ENCODE measurements at regions of chr4 and their contacts with region 1.

Region 1: DNA sequence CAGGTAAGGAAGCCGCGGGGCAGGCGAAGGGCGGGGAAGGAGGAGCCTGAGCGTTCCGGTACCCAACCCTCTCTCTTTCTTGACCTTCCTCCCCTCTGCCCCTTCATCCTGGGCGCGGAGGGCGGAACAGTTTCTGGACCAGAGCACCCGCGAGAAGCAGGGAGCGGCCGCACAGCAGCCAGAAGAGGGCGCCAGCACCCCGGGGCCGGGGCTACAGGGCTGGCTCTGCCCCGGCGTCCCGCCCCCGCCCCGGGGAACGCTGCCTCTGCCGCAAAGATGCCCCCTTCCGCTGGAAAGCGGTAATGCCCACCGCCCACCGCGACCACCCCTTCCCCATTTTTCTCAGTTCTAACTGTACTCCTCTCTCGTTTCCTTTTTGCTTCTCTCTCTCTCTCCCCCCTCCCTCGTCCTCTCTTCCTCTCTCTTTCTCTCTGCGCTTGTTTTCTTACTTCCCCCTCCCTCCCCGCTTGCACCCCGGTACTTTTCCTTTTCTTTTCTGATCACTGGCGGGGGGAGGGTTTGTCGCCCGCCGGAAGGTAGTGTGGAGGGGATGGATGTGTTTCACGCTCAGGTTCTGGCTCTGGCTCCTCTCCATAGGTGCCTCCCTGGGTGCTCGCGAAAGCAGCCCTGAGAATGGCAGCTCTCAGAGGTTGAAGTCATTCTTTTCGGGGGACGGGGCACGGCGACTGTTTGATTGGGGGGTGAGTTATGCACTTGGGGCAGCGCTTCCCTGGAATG is 13.1 kb upstream of the PRDM8 start:
- DNase-seq: peak; percentile 95
- H3K4me3 Mint-ChIP-seq: peak overlapping the region; percentile 99
- H3K27ac Mint-ChIP-seq: peak overlapping the region; percentile 97
- H3K4me1 Mint-ChIP-seq: peaks cover 53% of the 10 kb centered on the region
- H3K27me3 Mint-ChIP-seq: peaks cover 6% of the 10 kb centered on the region

Region 2: GRCh38 chr4:80017125-80017854 is 166.9 kb before region 1 on chr4:
- CTCF ChIA-PET with region 1: interaction called, 3 read pairs
- POLR2A ChIA-PET with region 1: interaction called, 17 read pairs
- DNase-seq: no peak
- H3K4me3 Mint-ChIP-seq: no peak overlapping the region
- H3K27ac Mint-ChIP-seq: no peak overlapping the region
- H3K4me1 Mint-ChIP-seq: peaks cover 26% of the 10 kb centered on the region
- H3K27me3 Mint-ChIP-seq: no peaks in the 10 kb centered on the region

Region 3: DNA sequence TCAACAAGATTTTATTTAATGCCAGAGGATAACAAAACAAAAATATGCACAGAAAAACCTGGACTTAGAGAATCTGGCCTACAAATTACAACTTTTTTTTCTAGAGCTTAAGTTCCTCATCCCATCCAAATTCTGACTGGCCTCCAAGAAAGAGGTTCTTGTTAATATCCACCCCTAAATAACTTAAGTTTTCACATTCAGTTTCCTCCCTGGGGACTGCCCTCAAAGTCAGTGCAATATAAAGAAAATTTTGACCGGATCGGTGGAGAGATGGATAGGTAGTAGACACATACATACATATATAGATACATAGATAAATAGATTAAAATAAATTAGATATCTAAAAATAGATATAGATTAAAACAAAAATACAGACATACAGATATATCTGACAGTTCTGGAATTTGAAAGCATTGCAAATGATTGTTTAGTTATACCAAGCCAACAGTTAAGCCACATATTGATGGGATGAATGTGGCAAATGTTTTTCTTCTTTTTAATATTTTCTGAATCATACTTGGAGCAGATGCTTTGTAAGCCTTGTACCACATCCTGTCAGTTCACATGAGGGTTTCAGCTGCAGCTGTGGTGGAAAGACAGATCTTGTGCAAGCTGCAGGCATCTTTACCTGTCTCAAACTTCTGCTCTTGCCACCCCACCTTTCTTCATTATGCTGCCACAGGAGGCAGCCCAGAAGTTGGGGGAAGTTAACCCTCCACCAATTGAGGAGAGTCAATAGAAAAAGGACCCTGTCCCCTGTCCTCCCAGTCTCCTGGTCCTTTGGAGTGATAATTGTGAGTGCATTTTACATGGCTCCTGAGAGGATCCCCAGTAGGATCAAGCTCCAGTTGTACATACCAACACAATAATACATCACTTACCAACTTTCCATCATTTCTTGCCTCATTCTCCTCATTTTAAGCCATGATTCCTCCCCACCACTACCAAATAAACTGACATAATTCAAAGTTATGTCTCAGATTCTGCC is 45.4 kb before region 1 on chr4:
- CTCF ChIA-PET with region 1: interaction called, 45 read pairs
- POLR2A ChIA-PET with region 1: interaction called, 53 read pairs
- DNase-seq: peak; percentile 79
- H3K4me3 Mint-ChIP-seq: peak overlapping the region; percentile 18
- H3K27ac Mint-ChIP-seq: peak overlapping the region; percentile 88
- H3K4me1 Mint-ChIP-seq: peaks cover 63% of the 10 kb centered on the region
- H3K27me3 Mint-ChIP-seq: no peaks in the 10 kb centered on the region

Region 4: DNA sequence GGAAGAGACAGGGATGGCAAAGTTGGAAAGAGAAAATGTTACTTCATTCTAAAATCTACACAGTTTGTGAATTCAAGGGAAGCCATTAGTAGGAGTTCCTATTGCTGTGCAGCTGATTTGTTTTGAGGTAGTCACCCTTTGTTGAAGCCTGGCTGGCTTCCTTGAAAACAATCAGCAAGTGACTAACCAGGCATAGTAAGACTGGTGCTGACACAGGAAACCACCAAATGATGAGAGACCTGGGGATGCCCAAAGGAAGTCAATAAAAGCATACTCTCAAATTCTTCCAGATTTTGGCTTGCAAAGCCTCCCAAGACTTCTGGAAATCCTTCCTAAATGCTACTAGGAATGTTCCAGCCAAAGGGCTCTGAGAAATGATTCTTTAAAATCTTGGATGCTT is 10.8 kb before region 1 on chr4:
- CTCF ChIA-PET with region 1: interaction called, 120 read pairs
- POLR2A ChIA-PET with region 1: interaction called, 152 read pairs
- DNase-seq: peak; percentile 71
- H3K4me3 Mint-ChIP-seq: peak overlapping the region; percentile 55
- H3K27ac Mint-ChIP-seq: peak overlapping the region; percentile 97
- H3K4me1 Mint-ChIP-seq: peaks cover 56% of the 10 kb centered on the region
- H3K27me3 Mint-ChIP-seq: no peaks in the 10 kb centered on the region

Region 5: DNA sequence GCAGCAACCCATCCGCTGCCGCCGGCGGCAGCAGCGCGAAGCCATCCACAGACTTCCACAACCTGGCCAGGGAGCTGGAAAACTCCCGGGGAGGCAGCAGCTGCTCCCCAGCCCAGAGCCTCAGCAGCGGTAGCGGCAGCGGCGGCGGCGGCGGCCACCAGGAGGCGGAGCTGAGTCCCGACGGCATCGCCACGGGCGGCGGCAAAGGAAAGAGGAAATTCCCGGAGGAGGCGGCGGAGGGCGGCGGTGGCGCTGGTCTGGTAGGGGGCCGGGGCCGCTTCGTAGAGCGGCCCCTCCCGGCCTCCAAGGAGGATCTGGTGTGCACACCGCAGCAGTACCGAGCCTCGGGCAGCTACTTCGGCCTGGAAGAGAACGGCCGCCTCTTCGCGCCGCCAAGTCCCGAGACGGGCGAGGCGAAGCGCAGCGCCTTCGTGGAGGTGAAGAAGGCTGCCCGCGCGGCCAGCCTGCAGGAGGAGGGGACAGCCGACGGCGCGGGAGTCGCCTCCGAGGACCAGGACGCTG is 18.0 kb after region 1 on chr4:
- CTCF ChIA-PET with region 1: interaction called, 135 read pairs
- POLR2A ChIA-PET with region 1: interaction called, 70 read pairs
- DNase-seq: peak; percentile 80
- H3K4me3 Mint-ChIP-seq: peak overlapping the region; percentile 76
- H3K27ac Mint-ChIP-seq: peak overlapping the region; percentile 67
- H3K4me1 Mint-ChIP-seq: peaks cover 28% of the 10 kb centered on the region
- H3K27me3 Mint-ChIP-seq: peaks cover 11% of the 10 kb centered on the region

Region 6: DNA sequence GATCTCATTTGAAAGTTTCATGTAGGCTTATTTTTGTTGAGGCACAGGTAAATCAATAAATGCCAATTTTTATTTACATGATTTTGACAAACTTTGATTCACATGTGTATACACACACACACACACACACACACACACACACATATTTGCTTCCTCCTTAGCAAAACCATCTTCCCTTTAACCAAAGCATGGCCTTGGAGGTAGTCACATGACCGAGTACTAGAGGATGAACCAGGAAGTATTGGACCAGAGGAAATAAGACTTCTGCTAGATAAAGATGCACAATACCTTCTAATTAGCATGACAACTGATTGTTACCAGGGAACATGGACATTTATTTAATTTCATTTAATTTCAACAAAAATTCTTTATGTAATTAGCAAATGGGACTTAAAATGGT is 127.9 kb after region 1 on chr4:
- CTCF ChIA-PET with region 1: no interaction called
- POLR2A ChIA-PET with region 1: no interaction called
- DNase-seq: no peak
- H3K4me3 Mint-ChIP-seq: no peak overlapping the region
- H3K27ac Mint-ChIP-seq: no peak overlapping the region
- H3K4me1 Mint-ChIP-seq: no peaks in the 10 kb centered on the region
- H3K27me3 Mint-ChIP-seq: peaks cover 14% of the 10 kb centered on the region

Region 7: GRCh38 chr4:80507507-80507906 is 323.3 kb after region 1 on chr4:
- CTCF ChIA-PET with region 1: no interaction called
- POLR2A ChIA-PET with region 1: no interaction called
- DNase-seq: no peak
- H3K4me3 Mint-ChIP-seq: no peak overlapping the region
- H3K27ac Mint-ChIP-seq: no peak overlapping the region
- H3K4me1 Mint-ChIP-seq: no peaks in the 10 kb centered on the region
- H3K27me3 Mint-ChIP-seq: no peaks in the 10 kb centered on the region